Activated B cell treated with CpG ODN at 0.5 μM for 24 hours (primary cell): ENCODE measurements at regions of chr15 and their contacts with region 1.

Region 1: GRCh38 chr15:41022487-41023090 is 69.3 kb downstream of the CHAC1 start:
- DNase-seq: no peak
- ATAC-seq: peak; percentile 66
- H3K4me3 Mint-ChIP-seq: no peak overlapping the region
- H3K27ac Mint-ChIP-seq: no peak overlapping the region
- H3K4me1 Mint-ChIP-seq: no peaks in the 10 kb centered on the region
- H3K27me3 Mint-ChIP-seq: no peaks in the 10 kb centered on the region
- CTCF ChIP-seq: no peak

Region 2: DNA sequence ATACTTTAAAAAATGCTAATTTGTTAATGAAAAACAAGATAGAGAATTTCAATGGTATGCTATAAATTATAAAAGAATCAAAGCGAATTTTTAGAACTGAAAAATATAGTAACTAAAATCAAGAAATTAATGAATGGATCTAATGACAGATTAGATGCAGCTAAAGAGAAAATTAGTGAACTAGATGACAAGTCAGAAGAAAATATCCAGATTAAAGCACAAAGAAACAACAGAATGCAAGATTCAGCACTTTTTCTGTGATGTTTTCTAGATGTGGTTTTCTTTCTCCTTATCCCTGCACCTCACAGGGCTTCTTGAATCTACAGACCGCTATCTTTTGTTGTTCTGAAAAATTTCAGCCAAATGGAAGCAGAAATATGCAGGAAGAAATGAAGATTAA is 39.1 kb after region 1 on chr15:
- CTCF ChIA-PET with region 1: no interaction called
- POLR2A ChIA-PET with region 1: no interaction called
- intact Hi-C with region 1: no loop called
- DNase-seq: no peak
- ATAC-seq: no peak
- H3K4me3 Mint-ChIP-seq: no peak overlapping the region
- H3K27ac Mint-ChIP-seq: no peak overlapping the region
- H3K4me1 Mint-ChIP-seq: no peaks in the 10 kb centered on the region
- H3K27me3 Mint-ChIP-seq: no peaks in the 10 kb centered on the region
- CTCF ChIP-seq: no peak

Region 3: DNA sequence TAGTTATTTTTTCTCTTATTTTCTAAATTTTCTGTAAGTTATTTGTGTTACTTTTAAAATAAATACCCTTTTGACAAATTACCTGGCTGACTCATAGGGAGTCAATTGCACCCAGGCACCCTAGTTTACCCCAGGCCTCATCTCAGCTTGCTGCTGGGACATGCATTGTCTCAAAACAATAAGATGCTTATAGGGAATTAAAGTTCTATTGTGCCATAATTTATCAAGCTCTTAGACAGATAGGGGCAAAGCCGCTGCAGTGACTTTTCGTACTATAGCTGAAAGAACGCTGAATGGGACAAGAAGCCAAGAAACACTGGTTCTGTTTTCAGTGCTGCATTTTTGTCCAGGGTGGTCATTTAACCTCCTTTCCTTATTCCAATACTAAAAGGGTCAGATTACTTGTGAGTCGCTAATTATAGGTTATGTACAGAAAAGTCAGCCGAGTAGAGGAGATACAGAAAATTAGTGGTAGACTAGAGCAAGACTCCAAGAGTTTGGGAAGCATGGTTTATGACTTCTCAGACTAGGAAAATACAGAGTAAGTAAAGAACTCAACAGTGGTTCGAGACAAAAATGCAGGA is 157.7 kb after region 1 on chr15:
- CTCF ChIA-PET with region 1: no interaction called
- POLR2A ChIA-PET with region 1: no interaction called
- intact Hi-C with region 1: loop called (anchors 10 kb)
- DNase-seq: no peak
- ATAC-seq: no peak
- H3K4me3 Mint-ChIP-seq: no peak overlapping the region
- H3K27ac Mint-ChIP-seq: no peak overlapping the region
- H3K4me1 Mint-ChIP-seq: peaks cover 4% of the 10 kb centered on the region
- H3K27me3 Mint-ChIP-seq: no peaks in the 10 kb centered on the region
- CTCF ChIP-seq: no peak

Region 4: GRCh38 chr15:41347236-41347635 is 324.6 kb after region 1 on chr15:
- CTCF ChIA-PET with region 1: no interaction called
- POLR2A ChIA-PET with region 1: no interaction called
- intact Hi-C with region 1: no loop called
- DNase-seq: no peak
- ATAC-seq: no peak
- H3K4me3 Mint-ChIP-seq: no peak overlapping the region
- H3K27ac Mint-ChIP-seq: no peak overlapping the region
- H3K4me1 Mint-ChIP-seq: no peaks in the 10 kb centered on the region
- H3K27me3 Mint-ChIP-seq: no peaks in the 10 kb centered on the region
- CTCF ChIP-seq: no peak